MCF 10A (cell line): ENCODE measurements at regions of chr16 and their contacts with region 1.

Region 1: DNA sequence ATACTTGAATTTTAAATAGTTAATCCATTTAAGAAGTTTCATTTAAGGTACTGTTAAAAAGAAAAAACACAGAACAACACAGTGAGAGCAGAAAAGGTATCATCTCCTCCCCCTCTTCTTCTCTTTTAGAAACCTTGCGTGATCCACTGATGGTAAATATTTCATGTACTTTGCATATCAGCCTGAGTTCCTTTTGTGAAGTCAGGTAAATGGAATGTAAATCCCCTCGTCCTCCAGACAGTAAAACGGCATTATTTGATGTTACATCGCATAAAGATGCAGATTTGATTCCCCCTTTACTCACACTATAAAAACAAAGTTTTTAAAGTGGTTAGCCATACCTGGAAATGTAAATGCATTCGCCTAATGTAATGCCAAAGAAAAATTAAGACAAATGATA is 234.4 kb downstream of the WWOX start:
- DNase-seq: no peak
- H3K4me3 Mint-ChIP-seq: no peak overlapping the region
- H3K27ac Mint-ChIP-seq: no peak overlapping the region
- H3K4me1 Mint-ChIP-seq: no peaks in the 10 kb centered on the region
- H3K27me3 Mint-ChIP-seq: no peaks in the 10 kb centered on the region
- CTCF ChIP-seq: no peak

Region 2: DNA sequence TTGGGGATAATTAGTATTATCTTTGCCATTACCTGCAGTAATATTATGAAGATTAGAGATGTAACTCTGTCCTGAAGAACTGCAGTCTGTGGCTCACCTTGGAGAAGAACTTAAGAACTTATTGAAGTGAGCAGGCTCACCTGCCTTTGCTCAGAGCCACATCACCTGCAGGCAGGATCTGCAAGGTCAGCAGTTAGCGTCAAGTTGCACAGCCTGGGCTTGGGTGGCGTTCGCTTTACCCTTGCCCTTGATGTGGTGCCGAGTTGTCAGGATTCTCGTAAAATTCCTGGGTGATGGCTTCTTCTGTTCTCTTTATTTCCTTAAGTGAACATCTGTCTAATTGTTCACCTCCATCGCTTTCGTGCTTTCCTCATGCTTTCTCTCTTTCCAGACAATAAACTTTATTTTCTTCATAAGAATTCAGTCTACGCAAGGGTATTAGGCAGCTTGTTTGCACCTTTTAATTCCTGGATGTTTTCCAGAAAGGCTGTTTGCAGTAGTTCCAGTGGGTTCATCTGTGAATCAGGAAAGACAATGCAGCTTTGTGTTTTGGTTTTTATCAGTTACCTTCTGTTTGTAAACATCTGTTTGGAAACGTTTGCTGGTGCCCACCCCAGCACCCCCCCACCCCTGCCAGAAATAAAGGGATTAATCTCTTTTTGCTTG is 19.9 kb after region 1 on chr16:
- CTCF ChIA-PET with region 1: interaction called, 3 read pairs
- POLR2A ChIA-PET with region 1: no interaction called
- intact Hi-C with region 1: loop called (anchors 1 kb)
- DNase-seq: no peak
- H3K4me3 Mint-ChIP-seq: no peak overlapping the region
- H3K27ac Mint-ChIP-seq: no peak overlapping the region
- H3K4me1 Mint-ChIP-seq: no peaks in the 10 kb centered on the region
- H3K27me3 Mint-ChIP-seq: no peaks in the 10 kb centered on the region
- CTCF ChIP-seq: no peak